Activated CD4-positive, alpha-beta T cell treated with anti-CD3 and anti-CD28 coated beads, Interleukin-2, amount 10 ng/mL, durations not matched to agents 24 days and 14 days (primary cell): ENCODE measurements at regions of chr16 and their contacts with region 1.

Region 1: GRCh38 chr16:57167953-57168352 is 17.9 kb downstream of the PSME3IP1 start:
- DNase-seq: peak; percentile 82
- H3K4me3 Mint-ChIP-seq: no peak overlapping the region
- H3K27ac Mint-ChIP-seq: no peak overlapping the region
- H3K4me1 Mint-ChIP-seq: peaks cover 2% of the 10 kb centered on the region
- H3K27me3 Mint-ChIP-seq: no peaks in the 10 kb centered on the region

Region 2: DNA sequence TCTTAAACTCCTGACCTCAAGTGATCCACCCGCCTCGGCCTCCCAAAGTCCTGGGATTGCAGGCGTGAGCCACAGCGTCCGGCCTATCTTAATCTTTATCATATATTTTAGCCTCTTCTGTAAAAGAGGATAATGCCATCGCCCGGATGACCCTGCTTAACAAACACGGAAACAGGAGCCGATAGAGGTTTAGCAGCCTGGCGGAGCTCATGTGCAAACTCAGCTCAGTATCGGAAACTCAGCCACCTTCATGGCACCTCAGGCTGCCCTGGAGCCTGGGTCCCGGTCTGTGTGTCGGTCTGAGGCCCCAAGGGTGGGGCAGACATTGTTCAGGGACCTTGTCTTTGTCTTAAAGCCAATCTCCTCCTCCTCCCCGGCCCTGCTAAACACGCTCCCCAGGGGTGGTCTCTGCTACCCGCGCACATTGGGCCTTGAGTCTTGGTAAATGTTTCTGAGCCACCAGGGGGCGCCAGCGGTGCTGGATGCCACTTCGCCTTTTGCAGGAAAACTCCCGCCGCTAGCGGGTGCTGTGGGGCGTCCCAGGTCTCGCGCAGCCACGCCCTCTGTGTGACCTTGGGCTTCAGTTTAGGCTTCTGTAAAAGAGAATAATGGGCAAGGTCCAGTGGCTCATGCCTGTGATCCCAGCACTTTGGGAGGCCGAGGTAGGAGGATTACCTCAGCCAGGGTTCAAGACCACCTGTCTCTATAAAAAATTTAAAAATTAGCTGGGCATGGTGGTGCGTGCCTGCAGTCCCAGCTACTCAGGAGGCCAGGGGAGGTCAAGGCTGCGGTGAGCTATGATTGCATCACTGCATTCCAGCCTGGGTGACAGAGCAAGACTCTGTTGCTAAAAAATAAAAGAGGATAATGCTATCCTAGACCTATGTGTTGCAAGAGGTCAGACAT is 203.5 kb before region 1 on chr16:
- intact Hi-C with region 1: loop called (anchors 1 kb)
- DNase-seq: peak; percentile 99
- H3K4me3 Mint-ChIP-seq: no peak overlapping the region
- H3K27ac Mint-ChIP-seq: peak overlapping the region; percentile 14
- H3K4me1 Mint-ChIP-seq: peaks cover 19% of the 10 kb centered on the region
- H3K27me3 Mint-ChIP-seq: peaks cover 1% of the 10 kb centered on the region

Region 3: GRCh38 chr16:57084257-57084770 is 83.6 kb before region 1 on chr16:
- intact Hi-C with region 1: loop called (anchors 1 kb)
- DNase-seq: peak; percentile 92
- H3K4me3 Mint-ChIP-seq: no peak overlapping the region
- H3K27ac Mint-ChIP-seq: peak overlapping the region; percentile 10
- H3K4me1 Mint-ChIP-seq: peaks cover 6% of the 10 kb centered on the region
- H3K27me3 Mint-ChIP-seq: no peaks in the 10 kb centered on the region

Region 4: GRCh38 chr16:57377080-57377841 is 209.3 kb after region 1 on chr16:
- intact Hi-C with region 1: no loop called
- DNase-seq: peak; percentile 59
- H3K4me3 Mint-ChIP-seq: no peak overlapping the region
- H3K27ac Mint-ChIP-seq: peak overlapping the region; percentile 29
- H3K4me1 Mint-ChIP-seq: peaks cover 19% of the 10 kb centered on the region
- H3K27me3 Mint-ChIP-seq: peaks cover 2% of the 10 kb centered on the region